Activated T-helper 2 cell treated with anti-CD3 and anti-CD28 coated beads, Interferon-gamma antibody, Interleukin-2, Interleukin-4, amounts not matched to agents 10 μg/mL and 5 μg/mL and 100 μg/mL, durations not matched to agents 14 hours and 24 hours and 36 hours (primary cell): ENCODE measurements at regions of chr13 and their contacts with region 1.

Region 1: DNA sequence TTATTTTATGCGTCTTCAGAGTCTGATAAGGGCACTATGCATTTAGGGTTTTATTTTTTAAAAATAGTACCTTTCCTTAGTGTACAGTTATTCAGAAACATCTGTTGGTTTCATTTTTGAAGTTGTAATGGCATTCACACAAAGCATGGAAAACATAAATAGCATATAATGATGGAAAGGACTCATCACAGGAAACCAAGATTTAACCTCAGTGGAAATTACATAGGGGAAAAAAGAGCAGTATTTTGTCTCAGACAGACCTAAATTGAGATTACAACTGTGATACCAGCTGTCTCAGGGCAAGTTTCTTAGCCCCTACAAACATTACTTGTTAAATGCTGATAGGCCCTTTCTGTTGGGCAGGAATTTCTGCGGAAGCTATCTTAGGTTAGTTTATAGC is 57.2 kb downstream of the NHLRC3 start:
- DNase-seq: no peak
- H3K4me3 Mint-ChIP-seq: peak overlapping the region; percentile 31
- H3K27ac Mint-ChIP-seq: peak overlapping the region; percentile 94
- H3K4me1 Mint-ChIP-seq: peaks cover 35% of the 10 kb centered on the region
- H3K27me3 Mint-ChIP-seq: no peaks in the 10 kb centered on the region

Region 2: DNA sequence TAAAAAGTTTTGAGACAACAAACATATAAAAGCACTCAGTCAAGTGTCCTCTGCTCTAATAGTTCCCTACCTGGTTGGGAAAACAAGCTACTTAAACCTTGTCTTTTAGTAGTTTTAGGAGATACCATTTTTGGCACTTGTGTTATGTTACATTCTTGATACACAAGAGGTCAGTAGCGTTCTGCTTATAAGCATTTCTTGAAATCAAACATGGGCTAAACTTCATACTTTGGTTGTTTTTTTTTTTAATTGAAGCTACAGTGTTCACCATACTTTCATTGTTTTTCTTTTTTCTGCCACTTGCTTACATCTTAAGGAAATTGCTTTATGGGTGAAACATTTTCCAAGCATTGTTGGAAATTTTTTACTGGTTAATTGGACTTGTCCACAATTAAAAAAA is 44.3 kb before region 1 on chr13:
- intact Hi-C with region 1: loop called (anchors 5 kb)
- DNase-seq: no peak
- H3K4me3 Mint-ChIP-seq: no peak overlapping the region
- H3K27ac Mint-ChIP-seq: no peak overlapping the region
- H3K4me1 Mint-ChIP-seq: no peaks in the 10 kb centered on the region
- H3K27me3 Mint-ChIP-seq: no peaks in the 10 kb centered on the region

Region 3: GRCh38 chr13:39073992-39074391 is 21.5 kb before region 1 on chr13:
- intact Hi-C with region 1: no loop called
- DNase-seq: no peak
- H3K4me3 Mint-ChIP-seq: no peak overlapping the region
- H3K27ac Mint-ChIP-seq: no peak overlapping the region
- H3K4me1 Mint-ChIP-seq: no peaks in the 10 kb centered on the region
- H3K27me3 Mint-ChIP-seq: peaks cover 27% of the 10 kb centered on the region

Region 4: GRCh38 chr13:39119422-39119821 is 23.9 kb after region 1 on chr13:
- intact Hi-C with region 1: no loop called
- DNase-seq: no peak
- H3K4me3 Mint-ChIP-seq: no peak overlapping the region
- H3K27ac Mint-ChIP-seq: no peak overlapping the region
- H3K4me1 Mint-ChIP-seq: peaks cover 6% of the 10 kb centered on the region
- H3K27me3 Mint-ChIP-seq: peaks cover 16% of the 10 kb centered on the region

Region 5: GRCh38 chr13:39144941-39145533 is 49.5 kb after region 1 on chr13:
- intact Hi-C with region 1: loop called (anchors 1 kb)
- DNase-seq: no peak
- H3K4me3 Mint-ChIP-seq: no peak overlapping the region
- H3K27ac Mint-ChIP-seq: no peak overlapping the region
- H3K4me1 Mint-ChIP-seq: peaks cover 12% of the 10 kb centered on the region
- H3K27me3 Mint-ChIP-seq: peaks cover 31% of the 10 kb centered on the region

Region 6: DNA sequence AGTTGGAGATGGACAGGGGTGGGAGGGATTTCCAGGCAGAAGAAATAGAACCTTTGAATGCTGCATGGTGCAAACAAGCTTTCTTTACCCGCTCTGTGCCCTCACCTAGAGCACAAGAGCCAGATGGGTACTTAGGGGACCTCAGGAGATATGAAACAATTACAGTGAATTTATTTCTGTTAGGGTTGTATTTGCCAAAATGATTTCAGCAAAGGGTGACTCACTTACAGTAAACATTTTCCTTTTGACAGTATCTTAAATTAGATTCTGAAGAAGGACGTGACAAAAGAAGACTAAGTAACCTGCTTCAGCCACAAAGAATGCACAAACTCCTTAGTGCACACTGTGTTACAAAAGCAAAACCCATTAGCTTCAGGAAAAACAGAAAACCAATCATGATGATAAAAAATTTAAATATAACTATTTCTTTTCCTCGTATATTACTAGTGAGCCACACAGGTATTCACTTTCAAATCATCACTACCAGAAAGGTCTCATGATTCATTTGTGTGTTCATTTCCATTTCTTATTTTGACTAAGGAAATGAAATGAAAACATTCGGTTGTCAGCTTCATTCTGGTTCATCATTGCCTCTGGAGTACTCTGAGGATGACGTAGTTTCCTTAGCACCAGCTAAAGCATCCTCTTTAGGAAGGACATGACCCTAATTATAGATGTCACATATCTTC is 101.6 kb after region 1 on chr13:
- intact Hi-C with region 1: loop called (anchors 1 kb)
- DNase-seq: no peak
- H3K4me3 Mint-ChIP-seq: no peak overlapping the region
- H3K27ac Mint-ChIP-seq: peak overlapping the region; percentile 72
- H3K4me1 Mint-ChIP-seq: peaks cover 9% of the 10 kb centered on the region
- H3K27me3 Mint-ChIP-seq: peaks cover 11% of the 10 kb centered on the region